ENCODE measurements at regions of chr21 and their contacts with region 1.

Region 1: DNA sequence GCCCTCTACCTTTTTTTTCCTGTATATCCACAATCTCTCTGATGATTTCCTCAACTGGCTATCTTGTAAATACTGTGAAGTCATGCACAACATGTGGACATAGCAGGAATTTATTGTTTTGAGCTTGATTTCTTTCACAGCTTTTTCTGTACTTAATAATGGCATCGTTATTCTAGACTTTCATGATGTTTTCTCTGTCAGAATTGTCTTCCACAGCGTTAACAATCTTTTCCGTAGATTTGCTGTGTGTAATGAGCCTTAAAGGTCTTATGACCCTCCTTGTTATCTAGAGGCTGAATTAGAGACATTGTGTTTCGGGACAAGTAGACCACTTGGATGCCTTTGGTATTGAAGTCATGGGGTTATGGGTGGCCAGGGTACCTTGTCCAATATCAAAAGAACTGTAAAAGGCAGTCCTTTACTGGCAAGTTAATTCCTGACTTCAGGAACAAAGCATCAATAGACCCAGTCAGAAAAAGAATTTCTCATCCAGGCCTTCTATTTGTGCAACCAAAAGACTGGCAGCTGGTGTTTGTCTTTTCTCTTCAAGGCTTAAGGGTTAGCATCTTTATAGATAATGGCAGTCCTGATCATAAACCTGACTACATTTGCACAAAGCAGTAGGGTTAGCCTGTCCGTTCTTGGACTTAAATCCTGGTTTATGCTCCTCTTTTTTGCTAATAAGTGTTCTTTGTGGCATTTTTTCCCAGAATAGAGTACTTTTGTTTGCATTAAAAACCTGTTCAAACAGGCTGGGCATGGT is 30.1 kb upstream of the CHAF1B start:
- DNase-seq: no peak
- H3K4me3 ChIP-seq: no peak overlapping the region
- H3K27ac ChIP-seq: no peak overlapping the region
- H3K4me1 ChIP-seq: peaks cover 0 to 4% (median 0%) of the 10 kb centered on the region in 4 donors
- H3K27me3 ChIP-seq: no peaks in the 10 kb centered on the region
- CTCF ChIP-seq: no peak
- EP300 ChIP-seq: no peak
- POLR2A ChIP-seq: no peak

Region 2: GRCh38 chr21:34864370-34865149 is 1490.5 kb before region 1 on chr21:
- in situ Hi-C with region 1: no loop called
- intact Hi-C with region 1: loop called (anchors 5 kb)
- DNase-seq: no peak
- H3K4me3 ChIP-seq: no peak overlapping the region
- H3K27ac ChIP-seq: peak overlapping the region; percentile 30 to 70 (median 64)
- H3K4me1 ChIP-seq: peaks cover 6 to 26% (median 17%) of the 10 kb centered on the region in 4 donors
- H3K27me3 ChIP-seq: no peaks in the 10 kb centered on the region
- CTCF ChIP-seq: no peak
- EP300 ChIP-seq: no peak
- POLR2A ChIP-seq: no peak

Measured in transverse colon (tissue), 4 donors.